BJ (cell line): ENCODE measurements at regions of chr12 and their contacts with region 1.

Region 1: GRCh38 chr12:120649442-120650232 is 9.2 kb downstream of the CABP1 start:
- DNase-seq: no peak
- H3K4me3 ChIP-seq: no peak overlapping the region; the same call in 1 of the 2 replicates
- H3K27me3 ChIP-seq: peaks cover 22% of the 10 kb centered on the region
- CTCF ChIP-seq: no peak

Region 2: DNA sequence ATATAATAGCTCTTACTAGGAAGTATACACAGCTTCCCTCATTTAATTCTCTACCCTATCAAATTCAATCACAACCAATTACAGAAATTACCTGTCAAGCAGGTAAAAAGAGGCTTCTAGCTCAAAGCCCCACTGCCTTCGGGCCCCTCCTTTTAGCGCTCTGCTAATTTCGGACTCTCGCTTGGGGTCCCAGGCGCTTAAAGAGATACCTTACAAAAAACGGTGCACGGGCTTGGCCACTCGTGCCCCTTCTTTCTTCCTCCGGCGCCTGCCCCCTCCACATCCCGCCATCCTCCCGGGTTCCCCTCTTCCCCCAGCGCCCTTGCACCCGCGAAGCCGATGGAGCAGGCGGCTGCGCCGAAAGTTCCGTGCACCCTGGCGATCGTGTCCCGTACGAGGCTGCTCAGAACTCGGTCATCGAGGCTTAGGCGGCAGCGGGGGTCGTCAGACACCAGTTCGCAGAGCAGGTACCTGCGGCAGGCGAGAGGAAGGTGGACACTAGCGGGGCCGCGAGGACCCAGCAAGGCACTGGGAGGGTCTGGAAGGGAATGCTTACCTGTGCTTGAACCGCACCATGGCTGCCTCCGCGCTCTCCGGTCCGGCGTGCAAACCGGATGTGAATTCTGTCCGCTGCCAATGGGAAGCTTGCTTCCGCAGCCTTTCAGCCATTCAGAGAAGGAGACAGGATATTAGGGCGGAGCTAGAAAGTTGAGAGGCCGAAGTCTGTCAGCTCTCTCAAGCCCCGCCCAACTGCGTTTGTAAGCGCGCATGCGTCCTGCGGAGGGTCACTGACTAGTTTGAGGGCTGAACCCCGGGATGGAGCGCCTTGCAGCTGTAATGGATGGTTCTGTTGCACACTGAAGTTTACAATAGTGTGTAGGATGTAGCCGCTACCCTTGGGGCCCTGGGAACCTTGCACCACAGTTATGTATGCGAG is 68.6 kb before region 1 on chr12 and contains the start of gene POP5:
- CTCF ChIA-PET with region 1: interaction called, 60 read pairs
- POLR2A ChIA-PET with region 1: no interaction called
- DNase-seq: peak; percentile 87
- H3K4me3 ChIP-seq: peak within 1 kb of the TSS; percentile 83
- H3K27me3 ChIP-seq: peaks cover 4% of the 10 kb centered on the region
- CTCF ChIP-seq: no peak
- polyA plus RNA-seq, gene POP5: 46.7 and 48.0 TPM in 2 replicates

Region 3: DNA sequence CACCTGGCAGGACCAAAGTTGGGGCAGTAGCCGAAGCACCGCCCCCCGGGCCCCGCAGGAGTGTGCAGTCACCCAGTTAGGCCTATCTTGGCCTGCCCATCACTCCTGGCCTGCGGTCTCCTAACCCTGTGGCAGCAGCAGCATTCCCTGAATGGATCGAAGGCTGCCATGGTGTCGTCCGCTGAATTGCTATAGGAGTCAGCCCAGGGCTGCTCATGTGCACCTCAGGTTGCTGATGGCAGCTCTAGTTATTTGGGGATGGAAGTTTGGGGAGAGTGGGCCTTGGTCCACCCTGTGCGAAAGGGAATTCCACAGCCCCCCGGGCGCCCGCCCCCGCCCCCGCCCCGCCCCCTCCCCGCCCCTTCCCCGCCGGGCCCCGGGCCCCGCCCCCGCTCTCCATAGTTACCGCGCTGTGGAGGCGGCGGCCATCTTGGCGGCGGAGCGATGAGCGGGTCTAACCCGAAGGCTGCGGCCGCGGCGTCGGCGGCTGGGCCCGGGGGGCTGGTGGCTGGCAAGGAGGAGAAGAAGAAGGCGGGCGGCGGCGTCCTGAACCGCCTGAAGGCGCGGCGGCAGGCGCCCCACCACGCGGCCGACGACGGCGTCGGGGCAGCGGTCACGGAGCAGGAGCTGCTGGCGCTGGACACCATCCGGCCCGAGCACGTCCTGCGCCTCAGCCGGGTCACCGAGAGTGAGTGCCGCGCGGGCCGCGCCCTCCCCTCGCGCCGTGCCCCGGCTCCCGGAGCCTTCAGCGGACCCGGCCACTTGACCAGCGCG is 60.6 kb after region 1 on chr12 and contains the start of gene UNC119B:
- CTCF ChIA-PET with region 1: interaction called, 14 read pairs
- POLR2A ChIA-PET with region 1: interaction called, 5 read pairs
- DNase-seq: no peak
- H3K4me3 ChIP-seq: peak within 1 kb of the TSS; percentile 81
- H3K27me3 ChIP-seq: no peaks in the 10 kb centered on the region
- CTCF ChIP-seq: no peak
- polyA plus RNA-seq, gene UNC119B: 32.0 and 37.0 TPM in 2 replicates

Region 4: DNA sequence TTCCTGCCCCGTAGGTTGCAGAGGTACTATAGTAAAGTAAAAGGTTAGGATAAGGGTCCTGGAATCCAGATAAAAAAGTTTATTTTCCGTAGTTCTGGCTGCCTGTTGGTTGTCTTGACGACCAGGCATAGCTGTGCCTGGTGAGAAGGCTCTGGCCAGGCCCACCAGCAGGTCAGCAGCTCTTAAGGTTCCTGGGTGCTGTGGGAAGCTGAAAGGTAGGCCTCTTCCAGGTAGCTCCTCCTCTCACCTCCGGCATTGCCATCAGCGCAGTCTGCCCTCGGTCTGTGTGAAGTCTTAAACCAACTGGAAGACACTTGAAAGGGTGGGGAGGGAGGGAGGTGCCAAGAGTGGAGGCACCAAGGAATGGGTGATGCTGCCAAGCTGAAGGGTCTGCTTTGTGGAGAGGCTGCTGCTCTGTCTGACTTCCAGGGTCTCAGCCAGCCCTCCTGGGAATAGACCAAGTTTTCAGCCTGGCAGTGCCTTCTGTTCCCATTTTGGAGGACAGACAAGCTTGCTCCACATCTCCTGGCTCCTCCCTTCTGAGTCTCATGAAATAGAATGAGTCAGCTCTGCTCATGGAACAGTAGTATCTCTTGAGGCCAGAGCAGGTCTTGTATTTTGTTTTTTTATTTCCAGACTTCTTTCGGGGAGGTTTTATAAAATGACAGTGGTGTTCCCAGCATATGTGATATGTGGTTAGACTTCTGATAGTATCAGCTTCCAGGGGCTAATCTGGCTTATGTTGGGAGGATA is 70.8 kb after region 1 on chr12:
- CTCF ChIA-PET with region 1: interaction called, 11 read pairs
- POLR2A ChIA-PET with region 1: no interaction called
- DNase-seq: no peak
- H3K4me3 ChIP-seq: no peak overlapping the region
- H3K27me3 ChIP-seq: no peaks in the 10 kb centered on the region
- CTCF ChIP-seq: no peak

Region 5: DNA sequence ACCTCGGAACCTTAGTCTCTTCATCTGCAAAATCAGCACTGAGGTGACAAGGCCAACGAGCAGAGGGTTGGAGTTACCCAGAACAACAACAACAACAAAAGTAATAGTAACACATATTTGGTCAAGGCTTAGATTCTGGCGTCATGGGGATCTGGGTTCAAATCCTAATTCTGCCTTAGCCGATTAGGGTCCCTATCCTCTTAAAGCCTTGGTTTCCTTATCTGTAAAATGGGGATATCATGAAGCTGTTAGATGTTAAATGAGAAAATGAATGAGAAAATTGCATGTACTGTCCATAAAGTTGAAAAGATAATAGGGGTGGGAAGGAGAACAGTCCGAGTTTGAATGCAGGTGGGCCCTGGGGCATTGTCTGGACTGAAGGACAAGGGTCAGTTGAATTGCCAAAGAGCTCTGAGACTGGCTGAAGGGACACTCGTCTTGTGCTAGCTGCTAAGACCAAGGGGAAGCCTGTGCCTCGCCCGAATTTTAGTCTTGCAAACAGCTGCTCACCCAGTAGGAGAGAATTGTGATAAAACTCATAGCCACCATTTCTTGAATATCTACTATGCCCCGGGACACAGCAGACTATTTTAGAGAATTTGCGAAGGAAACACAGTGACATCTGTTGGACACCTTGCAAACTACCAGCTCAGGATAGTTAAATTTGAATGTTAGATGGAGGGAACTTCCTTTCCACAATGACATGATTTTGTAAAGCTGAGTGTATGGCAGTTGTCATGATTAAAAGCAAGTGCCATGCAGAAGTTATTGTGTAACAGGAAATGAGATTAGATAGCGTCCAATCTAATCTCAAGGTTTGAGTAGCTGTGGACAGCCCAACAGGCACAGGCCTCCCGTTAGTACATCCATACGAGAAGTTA is 321.9 kb after region 1 on chr12:
- CTCF ChIA-PET with region 1: interaction called, 86 read pairs
- POLR2A ChIA-PET with region 1: no interaction called
- DNase-seq: peak; percentile 5
- H3K4me3 ChIP-seq: no peak overlapping the region
- H3K27me3 ChIP-seq: peaks cover 4% of the 10 kb centered on the region
- CTCF ChIP-seq: peak; percentile 78